ENCODE measurements at regions of chr3 and their contacts with region 1.

Region 1: DNA sequence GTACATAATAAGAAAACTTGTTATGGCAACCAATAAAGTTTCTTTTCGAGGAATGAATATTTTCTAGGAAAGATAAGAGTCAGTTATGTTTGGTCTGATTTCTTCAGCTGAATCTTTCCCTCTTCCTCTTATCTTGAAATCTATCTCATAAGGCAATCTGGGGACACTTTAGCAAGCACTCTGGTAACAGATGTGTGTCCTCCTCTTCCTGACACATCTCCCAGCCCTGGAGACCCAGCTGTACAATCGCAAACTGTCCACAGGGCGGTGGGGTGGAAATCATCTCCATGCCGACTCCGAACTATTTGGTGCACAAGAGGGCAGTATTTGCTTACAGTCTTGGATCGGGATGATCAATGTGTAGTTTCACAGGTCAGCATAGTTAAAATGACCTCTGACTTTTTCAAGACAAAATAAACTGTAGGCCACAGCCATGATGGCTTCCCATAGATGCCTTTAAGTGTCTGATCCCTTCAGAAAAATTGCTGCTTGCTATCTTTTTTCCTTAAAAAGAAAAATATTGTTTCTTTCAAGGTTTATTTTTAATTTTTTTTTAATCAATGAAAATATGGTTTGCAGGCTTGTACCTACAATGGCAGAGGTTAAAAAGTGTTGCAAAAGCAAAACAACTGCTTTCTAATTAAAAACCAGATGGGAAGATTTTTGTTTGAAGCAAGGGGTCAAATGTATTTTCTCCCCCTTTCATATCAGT is 17.7 kb downstream of the EEFSEC start:
- DNase-seq: peak; percentile 23 to 50
- ATAC-seq: peak; percentile 90 to 91
- H3K4me3 ChIP-seq: no peak overlapping the region
- H3K27ac ChIP-seq: no peak overlapping the region
- H3K4me1 ChIP-seq: peaks cover 35 to 38% of the 10 kb centered on the region in 2 donors
- H3K27me3 ChIP-seq: no peaks in the 10 kb centered on the region
- CTCF ChIP-seq: peak; percentile 59 to 76 (median 68)
- POLR2A ChIP-seq: no peak

Region 2: DNA sequence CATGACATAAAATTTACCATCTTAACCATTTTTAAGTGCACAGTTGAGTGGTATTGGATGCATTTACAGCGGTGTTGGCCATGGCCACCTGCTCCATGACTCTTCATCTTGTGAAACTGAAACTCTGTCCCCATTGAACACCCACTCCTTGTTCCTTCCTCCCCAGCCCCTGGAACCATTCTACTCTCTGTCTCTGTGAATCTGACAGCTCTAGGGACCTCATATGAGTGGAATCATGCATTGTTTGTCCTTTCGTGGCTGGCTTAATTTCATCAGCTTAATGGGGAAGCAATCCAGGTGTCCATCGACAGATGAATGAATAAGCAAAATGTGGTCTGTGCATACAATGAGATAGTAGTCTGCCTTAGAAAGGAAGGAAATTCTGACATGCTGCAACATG is 1145.5 kb before region 1 on chr3:
- in situ Hi-C with region 1: no loop called
- intact Hi-C with region 1: no loop called
- DNase-seq: no peak
- ATAC-seq: no peak
- H3K4me3 ChIP-seq: no peak overlapping the region
- H3K27ac ChIP-seq: no peak overlapping the region
- H3K4me1 ChIP-seq: no peaks in the 10 kb centered on the region
- H3K27me3 ChIP-seq: no peaks in the 10 kb centered on the region
- CTCF ChIP-seq: no peak
- POLR2A ChIP-seq: no peak

Region 3: DNA sequence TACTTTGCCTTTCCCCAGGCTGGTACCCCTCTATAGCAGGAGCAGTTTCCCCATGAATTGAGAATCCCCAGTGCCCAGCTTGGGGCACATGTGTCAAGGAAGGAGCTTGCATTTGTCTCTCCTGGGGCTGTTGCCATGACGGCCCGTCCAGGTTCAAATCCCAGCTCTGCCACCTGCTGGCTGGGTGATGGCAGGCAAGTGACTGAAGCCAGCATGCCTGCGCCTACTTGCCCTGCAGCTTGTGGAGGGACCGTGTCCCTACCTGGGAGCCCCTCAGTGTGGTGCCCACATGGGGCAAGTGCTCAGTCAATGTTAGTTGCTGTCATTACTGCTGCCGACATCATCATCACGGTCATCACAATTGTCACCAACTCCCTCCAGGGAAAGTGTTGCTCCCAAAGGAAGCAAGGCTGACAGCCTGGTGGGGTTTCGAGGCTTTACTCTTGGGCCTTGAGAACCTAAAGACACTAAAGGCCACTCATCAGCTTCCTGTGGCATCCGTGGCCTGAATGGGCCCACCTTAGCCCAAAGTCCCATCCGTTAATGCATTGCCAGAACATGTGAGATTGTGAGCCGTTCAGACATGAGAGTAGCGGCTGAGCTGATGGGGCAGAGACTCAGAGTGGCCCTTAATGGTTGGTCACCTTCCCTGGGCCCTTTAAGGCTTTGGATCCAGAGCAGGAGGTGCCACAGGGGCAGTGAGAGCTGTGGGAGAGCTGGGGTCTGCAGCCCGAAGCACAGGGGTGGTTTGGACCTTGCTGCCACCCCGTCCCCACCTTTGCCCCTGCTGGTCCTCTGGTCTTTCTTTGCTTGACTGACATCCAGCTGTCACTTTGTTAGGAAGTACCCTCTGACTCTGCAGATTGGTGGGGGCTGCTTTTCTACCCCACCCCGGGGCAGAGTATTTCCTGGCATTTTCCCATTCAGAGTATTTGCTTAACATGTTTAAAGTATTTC is 151.4 kb after region 1 on chr3:
- in situ Hi-C with region 1: loop called in 1 of 4 experiments (anchors 10 kb)
- intact Hi-C with region 1: loop called (anchors 1 kb)
- DNase-seq: peak; percentile 22 to 44
- ATAC-seq: no peak
- H3K4me3 ChIP-seq: no peak overlapping the region
- H3K27ac ChIP-seq: no peak overlapping the region
- H3K4me1 ChIP-seq: peaks cover 7 to 21% of the 10 kb centered on the region in 2 donors
- H3K27me3 ChIP-seq: no peaks in the 10 kb centered on the region
- CTCF ChIP-seq: peak; percentile 12 to 63 (median 56)
- POLR2A ChIP-seq: no peak

Region 4: GRCh38 chr3:128438488-128439072 is 267.6 kb after region 1 on chr3:
- in situ Hi-C with region 1: no loop called
- intact Hi-C with region 1: loop called (anchors 10 kb)
- DNase-seq: no peak
- ATAC-seq: no peak
- H3K4me3 ChIP-seq: no peak overlapping the region
- H3K27ac ChIP-seq: no peak overlapping the region
- H3K4me1 ChIP-seq: no peaks in the 10 kb centered on the region
- H3K27me3 ChIP-seq: peaks cover 3 to 8% (median 7%) of the 10 kb centered on the region in 3 donors
- CTCF ChIP-seq: peak in 1 of 5 experiments; percentile 24
- POLR2A ChIP-seq: no peak

Region 5: GRCh38 chr3:128503164-128503651 is 332.2 kb after region 1 on chr3:
- in situ Hi-C with region 1: loop called in 1 of 4 experiments (anchors 10 kb)
- intact Hi-C with region 1: no loop called
- DNase-seq: no peak
- ATAC-seq: no peak
- H3K4me3 ChIP-seq: no peak overlapping the region
- H3K27ac ChIP-seq: no peak overlapping the region
- H3K4me1 ChIP-seq: no peaks in the 10 kb centered on the region
- H3K27me3 ChIP-seq: peaks cover 19 to 24% (median 23%) of the 10 kb centered on the region in 3 donors
- CTCF ChIP-seq: no peak
- POLR2A ChIP-seq: no peak

Region 6: GRCh38 chr3:128603811-128604775 is 433.1 kb after region 1 on chr3:
- in situ Hi-C with region 1: no loop called
- intact Hi-C with region 1: loop called (anchors 10 kb)
- DNase-seq: no peak
- ATAC-seq: no peak
- H3K4me3 ChIP-seq: no peak overlapping the region
- H3K27ac ChIP-seq: no peak overlapping the region
- H3K4me1 ChIP-seq: peaks cover 7 to 13% of the 10 kb centered on the region in 2 donors
- H3K27me3 ChIP-seq: no peaks in the 10 kb centered on the region
- CTCF ChIP-seq: no peak
- POLR2A ChIP-seq: no peak